CD8-positive, alpha-beta T cell (primary cell): ENCODE measurements at regions of chr11 and their contacts with region 1.

Region 1: GRCh38 chr11:62556108-62556871 is 9.7 kb upstream of the AHNAK start:
- DNase-seq: peak; percentile 72 to 96 (median 90)
- ATAC-seq: peak; percentile 52
- H3K4me3 ChIP-seq: peak overlapping the region; percentile 14 to 28
- H3K4me3 Mint-ChIP-seq: peak overlapping the region; percentile 77
- H3K27ac ChIP-seq: peak overlapping the region; percentile 86 to 92
- H3K27ac Mint-ChIP-seq: peak overlapping the region; percentile 97
- H3K4me1 ChIP-seq: peaks cover 87% of the 10 kb centered on the region
- H3K4me1 Mint-ChIP-seq: peaks cover 86% of the 10 kb centered on the region
- H3K27me3 ChIP-seq: no peaks in the 10 kb centered on the region
- H3K27me3 Mint-ChIP-seq: no peaks in the 10 kb centered on the region
- CTCF ChIP-seq: no peak

Region 2: GRCh38 chr11:62419314-62419929 is 136.9 kb before region 1 on chr11:
- CTCF ChIA-PET with region 1: interaction called, 177 read pairs
- POLR2A ChIA-PET with region 1: interaction called, 15 read pairs
- intact Hi-C with region 1: loop called (anchors 1 kb)
- DNase-seq: no peak
- ATAC-seq: no peak
- H3K4me3 ChIP-seq: no peak overlapping the region
- H3K4me3 Mint-ChIP-seq: no peak overlapping the region
- H3K27ac ChIP-seq: no peak overlapping the region
- H3K27ac Mint-ChIP-seq: no peak overlapping the region
- H3K4me1 ChIP-seq: peaks cover 1% of the 10 kb centered on the region
- H3K4me1 Mint-ChIP-seq: peaks cover 8% of the 10 kb centered on the region
- H3K27me3 ChIP-seq: no peaks in the 10 kb centered on the region
- H3K27me3 Mint-ChIP-seq: no peaks in the 10 kb centered on the region
- CTCF ChIP-seq: no peak

Region 3: GRCh38 chr11:62542750-62543567 is 13.3 kb before region 1 on chr11:
- CTCF ChIA-PET with region 1: interaction called, 265 read pairs
- POLR2A ChIA-PET with region 1: interaction called, 89 read pairs
- intact Hi-C with region 1: loop called (anchors 1 kb)
- DNase-seq: peak in 8 of 9 experiments; percentile 60 to 91 (median 76)
- ATAC-seq: peak; percentile 64
- H3K4me3 ChIP-seq: peak overlapping the region; percentile 52 to 74
- H3K4me3 Mint-ChIP-seq: peak overlapping the region; percentile 94
- H3K27ac ChIP-seq: peak overlapping the region; percentile 79 to 85
- H3K27ac Mint-ChIP-seq: peak overlapping the region; percentile 93
- H3K4me1 ChIP-seq: peaks cover 84% of the 10 kb centered on the region
- H3K4me1 Mint-ChIP-seq: peaks cover 73% of the 10 kb centered on the region
- H3K27me3 ChIP-seq: no peaks in the 10 kb centered on the region
- H3K27me3 Mint-ChIP-seq: no peaks in the 10 kb centered on the region
- CTCF ChIP-seq: peak; percentile 94

Region 4: GRCh38 chr11:62573592-62574362 is 17.5 kb after region 1 on chr11 and contains the start of gene EEF1G:
- CTCF ChIA-PET with region 1: interaction called, 53 read pairs
- POLR2A ChIA-PET with region 1: interaction called, 40 read pairs
- intact Hi-C with region 1: loop called (anchors 1 to 2 kb)
- DNase-seq: peak; percentile 95 to 100 (median 97)
- ATAC-seq: peak; percentile 94
- H3K4me3 ChIP-seq: peak within 1 kb of the TSS; percentile 97 to 99
- H3K4me3 Mint-ChIP-seq: peak within 1 kb of the TSS; percentile 97
- H3K27ac ChIP-seq: peak within 1 kb of the TSS; percentile 85
- H3K27ac Mint-ChIP-seq: peak within 1 kb of the TSS; percentile 90
- H3K4me1 ChIP-seq: peaks cover 28% of the 10 kb centered on the region
- H3K4me1 Mint-ChIP-seq: peaks cover 55% of the 10 kb centered on the region
- H3K27me3 ChIP-seq: no peaks in the 10 kb centered on the region
- H3K27me3 Mint-ChIP-seq: no peaks in the 10 kb centered on the region
- CTCF ChIP-seq: no peak
- total RNA-seq, gene EEF1G: 2,174 to 2,204 TPM

Region 5: DNA sequence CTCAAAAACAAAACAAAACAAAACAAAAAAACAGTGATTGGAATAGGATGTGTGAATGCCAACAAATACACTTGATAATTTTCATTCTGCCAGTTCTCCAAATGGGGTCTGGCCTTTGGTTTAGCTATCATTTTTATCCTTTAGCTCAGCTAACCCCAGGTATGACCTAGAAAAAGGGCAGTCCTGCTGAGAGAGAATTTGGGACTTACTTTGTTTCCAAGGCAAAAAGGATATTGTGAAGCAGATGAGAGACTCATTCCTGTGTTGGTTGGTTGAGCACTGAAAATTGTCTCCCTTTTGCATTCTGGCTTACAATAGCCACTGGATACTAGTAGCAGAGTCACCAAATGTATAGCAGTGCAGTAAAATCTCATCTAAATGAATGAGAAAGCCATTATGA is 180.9 kb after region 1 on chr11:
- CTCF ChIA-PET with region 1: no interaction called
- POLR2A ChIA-PET with region 1: no interaction called
- intact Hi-C with region 1: no loop called
- DNase-seq: no peak
- ATAC-seq: no peak
- H3K4me3 ChIP-seq: no peak overlapping the region
- H3K4me3 Mint-ChIP-seq: no peak overlapping the region
- H3K27ac ChIP-seq: no peak overlapping the region
- H3K27ac Mint-ChIP-seq: no peak overlapping the region
- H3K4me1 ChIP-seq: no peaks in the 10 kb centered on the region
- H3K4me1 Mint-ChIP-seq: peaks cover 7% of the 10 kb centered on the region
- H3K27me3 ChIP-seq: no peaks in the 10 kb centered on the region
- H3K27me3 Mint-ChIP-seq: no peaks in the 10 kb centered on the region
- CTCF ChIP-seq: no peak